Posterior vena cava (tissue), 2 donors: ENCODE measurements at regions of chr4 and their contacts with region 1.

Region 1: DNA sequence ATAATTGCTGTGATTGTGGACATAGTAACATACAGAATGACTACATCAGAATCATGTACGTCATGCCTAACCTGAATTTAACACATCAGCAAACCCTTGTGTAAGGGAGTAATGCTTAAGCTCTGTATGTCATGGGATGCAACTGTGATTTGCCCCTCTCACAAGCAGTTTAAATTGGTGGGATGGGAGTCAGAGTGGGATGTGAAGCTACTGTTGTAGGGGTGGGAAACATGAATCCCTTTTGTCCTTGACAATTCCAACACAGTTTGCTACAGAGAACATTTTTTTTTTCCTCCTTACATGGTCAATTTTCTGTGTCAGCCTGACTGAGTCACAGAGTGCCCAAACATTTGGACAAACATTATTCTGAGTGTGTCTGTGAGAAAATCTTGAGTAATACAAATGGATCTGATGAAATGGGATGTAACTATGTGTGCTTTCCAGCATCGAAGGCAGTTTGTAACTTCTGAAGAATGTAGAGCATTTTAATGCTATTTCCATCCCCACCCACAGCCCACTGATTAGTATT is 392.8 kb downstream of the GPM6A start:
- DNase-seq: no peak

Region 2: DNA sequence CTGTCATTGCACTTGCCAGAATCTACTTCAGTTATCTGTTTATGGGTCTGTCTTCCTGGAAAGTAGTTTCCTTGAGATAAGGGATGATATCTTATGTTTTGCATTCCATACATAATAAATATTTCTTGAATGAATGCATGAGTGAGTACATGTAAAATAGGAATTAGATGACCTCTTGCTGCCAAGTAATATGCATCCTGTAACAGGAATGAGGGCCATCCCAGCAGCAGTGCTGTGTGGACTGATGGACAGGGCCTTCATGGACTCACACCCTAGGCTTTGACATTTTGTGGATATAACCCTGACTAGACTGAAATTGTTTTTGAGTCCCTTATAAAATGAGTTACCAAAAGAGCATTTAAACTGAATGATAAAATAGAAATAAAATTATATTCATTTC is 1813.2 kb after region 1 on chr4:
- intact Hi-C with region 1: loop called in 1 of 2 experiments (anchors 5 kb)
- DNase-seq: no peak